Heart left ventricle (tissue), 16 donors: ENCODE measurements at regions of chrX and their contacts with region 1.

Region 1: DNA sequence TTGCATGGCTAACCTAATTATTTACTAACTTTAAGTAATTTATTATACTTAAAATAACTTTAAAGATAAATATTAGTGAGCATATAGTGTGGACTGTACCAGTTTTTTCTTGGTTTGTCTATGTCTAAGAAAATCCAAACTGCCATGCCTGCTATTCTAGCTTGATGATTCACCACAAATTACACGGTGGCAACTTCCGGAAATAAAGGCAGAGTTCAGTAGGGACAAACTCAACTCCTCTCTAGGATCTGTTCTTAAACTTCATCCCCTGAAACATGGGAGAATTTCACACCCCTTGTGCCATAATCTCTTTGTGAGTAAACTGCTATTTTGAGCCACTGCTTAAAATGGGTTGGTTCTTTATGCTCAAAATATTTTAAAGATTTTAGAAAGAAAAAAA is 213.6 kb upstream of the NRK start:
- DNase-seq: no peak
- ATAC-seq: peak in 3 of 4 donors; percentile 42 to 61 (median 45)
- H3K4me3 ChIP-seq: no peak overlapping the region
- H3K27ac ChIP-seq: peak overlapping the region in 3 of 12 donors; percentile 3 to 43 (median 29)
- H3K4me1 ChIP-seq: no peaks in the 10 kb centered on the region
- H3K27me3 ChIP-seq: no peaks in the 10 kb centered on the region
- CTCF ChIP-seq: no peak
- POLR2A ChIP-seq: no peak

Region 2: GRCh38 chrX:105483011-105483410 is 125.7 kb before region 1 on chrX:
- intact Hi-C with region 1: loop called in 1 of 10 experiments (anchors 5 kb)
- DNase-seq: no peak
- ATAC-seq: peak in 2 of 4 donors; percentile 41 to 67
- H3K4me3 ChIP-seq: no peak overlapping the region
- H3K27ac ChIP-seq: no peak overlapping the region
- H3K4me1 ChIP-seq: no peaks in the 10 kb centered on the region
- H3K27me3 ChIP-seq: no peaks in the 10 kb centered on the region
- CTCF ChIP-seq: no peak
- POLR2A ChIP-seq: no peak